ENCODE measurements at regions of chr1 and their contacts with region 1.

Region 1: DNA sequence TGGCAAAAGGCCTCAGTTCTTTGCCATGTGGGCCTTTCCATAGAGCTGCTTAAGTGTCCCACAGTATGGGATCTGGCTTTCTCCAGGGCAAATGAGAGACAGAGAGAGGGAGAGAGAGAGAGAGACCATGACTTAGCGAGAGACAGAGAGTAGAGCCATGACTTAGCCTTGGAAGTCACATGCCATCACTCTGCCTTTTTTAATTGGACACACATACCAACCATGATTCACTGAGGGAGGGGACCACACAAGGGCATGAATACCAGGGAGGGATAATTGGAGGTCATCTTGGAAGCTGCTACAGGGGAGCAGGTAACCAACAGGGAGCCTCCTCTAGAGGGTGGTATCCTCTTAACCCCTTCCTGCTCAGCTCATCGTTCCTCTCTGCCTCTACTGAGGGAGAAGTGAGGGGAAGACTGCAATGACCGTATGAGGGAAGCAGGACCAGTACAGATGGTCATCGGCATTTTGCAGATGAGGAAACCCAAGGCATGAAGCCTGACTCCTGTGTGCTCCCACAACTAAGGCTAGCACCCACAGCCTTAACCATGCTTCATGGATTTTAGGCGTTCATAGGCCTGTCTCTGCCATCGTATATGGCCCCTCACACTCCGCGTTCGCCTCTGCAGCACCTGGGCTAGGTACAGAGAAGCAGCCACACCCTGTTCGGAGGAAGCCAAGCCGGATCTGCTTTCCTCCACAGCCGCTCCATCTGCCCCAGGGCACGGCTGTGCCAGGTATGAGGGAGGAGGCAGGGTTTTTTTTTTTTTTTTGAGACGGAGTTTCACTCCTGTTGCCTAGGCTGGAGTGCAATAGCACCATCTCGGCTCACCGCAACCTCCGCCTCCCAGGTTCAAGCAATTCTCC is 38.6 kb downstream of the MEF2D start:
- DNase-seq: peak; percentile 63
- H3K4me3 ChIP-seq: no peak overlapping the region
- H3K27ac ChIP-seq: peak overlapping the region; percentile 83 to 92
- H3K4me1 ChIP-seq: peaks cover 21% of the 10 kb centered on the region
- H3K27me3 ChIP-seq: no peaks in the 10 kb centered on the region
- CTCF ChIP-seq: no peak
- POLR2A ChIP-seq: no peak

Region 2: DNA sequence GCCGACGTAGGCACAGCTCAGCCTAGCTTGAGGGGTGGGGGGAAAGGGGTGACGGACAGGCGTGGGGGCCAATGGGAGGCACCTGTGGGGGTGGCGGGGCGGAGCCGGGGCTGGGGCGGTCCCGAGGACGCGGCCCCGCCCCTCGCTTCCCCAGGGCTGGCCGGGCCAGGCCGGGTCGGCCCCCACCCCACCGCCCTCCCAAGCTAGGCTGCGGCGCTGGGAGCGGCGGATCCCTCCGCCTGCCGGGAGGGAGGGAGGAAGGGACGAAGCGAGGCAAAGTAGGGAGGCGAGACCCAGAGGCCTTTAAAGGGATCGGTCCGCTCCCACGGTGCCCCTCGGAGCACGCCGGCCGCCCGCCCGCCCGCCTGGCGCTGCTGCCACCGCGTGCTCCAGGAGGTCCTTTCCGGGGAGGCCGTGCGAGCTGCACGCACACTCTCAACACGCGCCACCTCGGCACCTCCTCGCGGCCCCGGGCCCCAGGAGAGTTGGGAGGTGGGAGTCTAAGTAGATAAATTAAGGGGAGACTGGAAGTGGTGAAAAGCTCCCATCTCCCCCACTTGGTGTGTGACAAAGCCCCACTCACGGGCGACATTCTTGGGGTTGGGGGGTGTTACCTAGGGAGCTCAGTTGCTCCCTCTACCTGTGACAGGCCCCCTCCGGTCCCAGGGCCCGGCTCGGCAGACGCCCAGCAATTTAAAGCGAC is 38.9 kb after region 1 on chr1:
- intact Hi-C with region 1: loop called (anchors 1 kb)
- DNase-seq: peak; percentile 96
- H3K4me3 ChIP-seq: peak overlapping the region; percentile 87 to 88
- H3K27ac ChIP-seq: peak overlapping the region; percentile 99 to 100
- H3K4me1 ChIP-seq: peaks cover 29% of the 10 kb centered on the region
- H3K27me3 ChIP-seq: no peaks in the 10 kb centered on the region
- CTCF ChIP-seq: peak; percentile 46 to 76 (median 68)
- POLR2A ChIP-seq: peak; percentile 81

Measured in prostate gland (tissue), 2 donors.